Heart left ventricle (tissue), 16 donors: ENCODE measurements at regions of chr5 and their contacts with region 1.

Region 1: GRCh38 chr5:65624571-65625555 is at the starts of genes SHLD3 and TRAPPC13:
- DNase-seq: peak; percentile 77 to 87 (median 85)
- ATAC-seq: peak; percentile 89 to 92 (median 90)
- H3K4me3 ChIP-seq: peak within 1 kb of the TSS; percentile 60 to 96 (median 76)
- H3K27ac ChIP-seq: peak within 1 kb of the TSS; percentile 65 to 94 (median 91)
- H3K4me1 ChIP-seq: peaks cover 0 to 37% (median 29%) of the 10 kb centered on the region in 12 donors
- H3K27me3 ChIP-seq: no peaks in the 10 kb centered on the region
- CTCF ChIP-seq: peak in 1 of 12 donors; percentile 4
- POLR2A ChIP-seq: peak in 1 of 2 donors; percentile 20
- total RNA-seq, gene SHLD3: 1.3 to 2.4 (median 1.9) TPM
- total RNA-seq, gene TRAPPC13: 9.5 to 24.8 (median 18.7) TPM

Region 2: GRCh38 chr5:65721720-65722574 is 97.1 kb after region 1 on chr5 and contains the starts of genes NLN and SGTB:
- intact Hi-C with region 1: loop called in 1 of 10 experiments (anchors 5 kb)
- DNase-seq: peak; percentile 89 to 95 (median 90)
- ATAC-seq: peak; percentile 87 to 99 (median 98)
- H3K4me3 ChIP-seq: peak within 1 kb of the TSS; percentile 78 to 98 (median 94)
- H3K27ac ChIP-seq: peak within 1 kb of the TSS in 11 of 12 donors; percentile 61 to 87 (median 79)
- H3K4me1 ChIP-seq: peaks cover 0 to 46% (median 10%) of the 10 kb centered on the region in 12 donors
- H3K27me3 ChIP-seq: no peaks in the 10 kb centered on the region
- CTCF ChIP-seq: no peak
- POLR2A ChIP-seq: peak in 1 of 2 donors; percentile 35
- total RNA-seq, gene NLN: 5.3 to 28.2 (median 14.7) TPM
- total RNA-seq, gene SGTB: 2.9 to 14.4 (median 7.1) TPM

Region 3: DNA sequence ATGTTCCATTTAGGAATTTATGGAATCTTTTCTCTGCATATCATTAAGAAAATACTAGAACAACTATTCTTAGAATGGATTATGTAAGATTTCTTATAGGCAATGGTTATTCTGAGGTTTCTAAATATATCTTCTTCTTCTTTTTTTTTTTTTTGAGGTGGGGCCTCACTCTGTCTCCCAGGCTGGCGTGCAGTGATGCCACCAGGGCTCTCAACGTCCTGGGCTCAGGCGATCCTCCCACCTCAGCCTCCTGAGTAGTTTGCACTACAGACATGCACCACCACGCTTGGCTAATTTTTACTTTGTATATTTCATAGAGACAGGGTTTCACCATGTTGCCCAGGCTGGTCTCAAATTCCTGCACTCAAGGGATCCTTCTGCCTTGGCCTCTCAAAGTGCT is 656.4 kb after region 1 on chr5:
- intact Hi-C with region 1: no loop called
- DNase-seq: no peak
- ATAC-seq: no peak
- H3K4me3 ChIP-seq: no peak overlapping the region
- H3K27ac ChIP-seq: no peak overlapping the region
- H3K4me1 ChIP-seq: peaks cover 0 to 16% (median 0%) of the 10 kb centered on the region in 12 donors
- H3K27me3 ChIP-seq: no peaks in the 10 kb centered on the region
- CTCF ChIP-seq: no peak
- POLR2A ChIP-seq: no peak